Activated CD4-positive, alpha-beta memory T cell treated with anti-CD3 and anti-CD28 coated beads for 36 hours (primary cell): ENCODE measurements at regions of chr19 and their contacts with region 1.

Region 1: DNA sequence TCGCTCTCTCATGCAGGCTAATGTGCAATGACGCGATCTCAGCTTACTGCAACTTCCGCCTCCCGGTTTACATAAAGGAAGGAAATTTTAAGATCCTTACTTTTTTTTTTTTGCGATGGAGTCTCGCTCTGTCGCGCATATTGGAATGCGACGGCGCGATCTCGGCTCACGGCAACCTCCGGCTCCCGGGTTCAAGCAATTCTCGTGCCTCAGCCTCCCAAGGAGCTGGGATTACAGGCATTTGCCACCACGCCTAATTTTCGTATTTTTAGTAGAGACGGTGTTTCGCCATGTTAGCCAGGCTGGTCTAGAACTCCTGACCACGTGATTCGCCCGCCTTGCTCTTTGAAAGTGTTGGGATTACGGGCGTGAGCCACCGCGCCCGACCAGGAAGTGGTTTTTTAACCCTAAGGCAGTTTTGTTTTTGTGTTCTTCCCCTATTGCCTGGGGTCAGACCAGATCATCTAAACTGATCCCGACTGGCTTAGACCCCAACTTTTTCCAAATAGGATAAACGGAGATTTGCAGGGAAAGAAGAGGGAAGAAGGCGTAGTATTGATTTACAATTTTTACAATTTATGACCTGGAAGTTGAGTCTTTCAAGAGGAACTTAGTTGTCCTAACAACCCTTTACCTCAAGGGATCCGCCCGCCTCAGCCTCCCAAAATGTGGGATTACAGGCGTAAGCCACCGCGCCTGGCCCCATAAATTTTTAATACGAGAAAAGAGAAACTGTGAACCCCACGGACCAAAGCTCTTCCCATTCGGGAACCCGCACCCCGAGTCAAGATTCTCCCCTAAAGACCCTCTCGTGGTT is 142.0 kb downstream of the ZNF737 start:
- DNase-seq: peak; percentile 65
- H3K4me3 Mint-ChIP-seq: peak overlapping the region; percentile 100
- H3K27ac Mint-ChIP-seq: peak overlapping the region; percentile 100
- H3K4me1 Mint-ChIP-seq: peaks cover 13% of the 10 kb centered on the region
- H3K27me3 Mint-ChIP-seq: no peaks in the 10 kb centered on the region

Region 2: GRCh38 chr19:20051841-20052768 is 371.5 kb before region 1 on chr19:
- CTCF ChIA-PET with region 1: no interaction called
- POLR2A ChIA-PET with region 1: no interaction called
- intact Hi-C with region 1: loop called (anchors 10 kb)
- DNase-seq: peak; percentile 86
- H3K4me3 Mint-ChIP-seq: peak overlapping the region; percentile 84
- H3K27ac Mint-ChIP-seq: peak overlapping the region; percentile 65
- H3K4me1 Mint-ChIP-seq: peaks cover 13% of the 10 kb centered on the region
- H3K27me3 Mint-ChIP-seq: no peaks in the 10 kb centered on the region

Region 3: DNA sequence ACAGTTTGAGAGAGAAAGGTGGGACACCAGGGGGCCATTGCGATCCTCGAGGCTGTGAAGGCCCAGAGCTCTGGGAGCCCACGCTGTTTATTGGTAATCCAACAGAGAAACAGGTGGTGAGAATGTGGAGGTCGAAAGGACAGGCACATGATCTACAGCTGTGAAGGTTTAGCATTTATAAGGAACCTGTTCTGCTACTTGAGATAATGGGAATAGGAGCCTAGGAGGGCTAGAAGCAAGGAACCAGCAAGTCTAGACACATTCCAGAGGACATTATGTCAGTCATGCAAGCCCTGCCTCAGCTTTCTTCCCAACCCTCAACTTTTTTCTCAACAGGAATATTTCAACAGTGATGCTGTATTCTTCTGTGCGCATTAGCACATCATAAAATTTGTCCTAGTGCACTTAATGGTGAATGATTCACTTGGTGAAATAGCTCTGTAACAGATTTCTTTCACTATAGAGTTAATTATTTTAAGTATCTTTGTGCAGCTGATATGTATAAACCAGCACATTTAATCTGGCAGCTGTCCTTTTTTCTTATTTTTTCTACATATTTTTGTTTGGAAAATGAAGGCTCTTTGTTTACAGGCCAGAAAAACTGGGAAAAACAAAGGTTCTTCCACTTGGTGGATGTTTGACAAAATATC is 320.4 kb before region 1 on chr19:
- CTCF ChIA-PET with region 1: no interaction called
- POLR2A ChIA-PET with region 1: no interaction called
- intact Hi-C with region 1: no loop called
- DNase-seq: no peak
- H3K4me3 Mint-ChIP-seq: no peak overlapping the region
- H3K27ac Mint-ChIP-seq: no peak overlapping the region
- H3K4me1 Mint-ChIP-seq: no peaks in the 10 kb centered on the region
- H3K27me3 Mint-ChIP-seq: no peaks in the 10 kb centered on the region

Region 4: GRCh38 chr19:20167020-20167644 is 256.5 kb before region 1 on chr19 and contains the start of gene ZNF486:
- CTCF ChIA-PET with region 1: interaction called, 6 read pairs
- POLR2A ChIA-PET with region 1: interaction called, 6 read pairs
- intact Hi-C with region 1: loop called (anchors 5 kb)
- DNase-seq: peak; percentile 97
- H3K4me3 Mint-ChIP-seq: peak within 1 kb of the TSS; percentile 98
- H3K27ac Mint-ChIP-seq: peak within 1 kb of the TSS; percentile 92
- H3K4me1 Mint-ChIP-seq: peaks cover 45% of the 10 kb centered on the region
- H3K27me3 Mint-ChIP-seq: no peaks in the 10 kb centered on the region
- total RNA-seq, gene ZNF486: 12.5 to 12.9 TPM

Region 5: GRCh38 chr19:20565321-20566018 is 141.9 kb after region 1 on chr19 and contains the start of gene ZNF737:
- CTCF ChIA-PET with region 1: no interaction called
- POLR2A ChIA-PET with region 1: interaction called, 20 read pairs
- intact Hi-C with region 1: loop called (anchors 1 kb)
- DNase-seq: peak; percentile 95
- H3K4me3 Mint-ChIP-seq: peak within 1 kb of the TSS; percentile 94
- H3K27ac Mint-ChIP-seq: peak within 1 kb of the TSS; percentile 93
- H3K4me1 Mint-ChIP-seq: peaks cover 11% of the 10 kb centered on the region
- H3K27me3 Mint-ChIP-seq: no peaks in the 10 kb centered on the region
- total RNA-seq, gene ZNF737: 9.0 to 9.9 TPM

Region 6: DNA sequence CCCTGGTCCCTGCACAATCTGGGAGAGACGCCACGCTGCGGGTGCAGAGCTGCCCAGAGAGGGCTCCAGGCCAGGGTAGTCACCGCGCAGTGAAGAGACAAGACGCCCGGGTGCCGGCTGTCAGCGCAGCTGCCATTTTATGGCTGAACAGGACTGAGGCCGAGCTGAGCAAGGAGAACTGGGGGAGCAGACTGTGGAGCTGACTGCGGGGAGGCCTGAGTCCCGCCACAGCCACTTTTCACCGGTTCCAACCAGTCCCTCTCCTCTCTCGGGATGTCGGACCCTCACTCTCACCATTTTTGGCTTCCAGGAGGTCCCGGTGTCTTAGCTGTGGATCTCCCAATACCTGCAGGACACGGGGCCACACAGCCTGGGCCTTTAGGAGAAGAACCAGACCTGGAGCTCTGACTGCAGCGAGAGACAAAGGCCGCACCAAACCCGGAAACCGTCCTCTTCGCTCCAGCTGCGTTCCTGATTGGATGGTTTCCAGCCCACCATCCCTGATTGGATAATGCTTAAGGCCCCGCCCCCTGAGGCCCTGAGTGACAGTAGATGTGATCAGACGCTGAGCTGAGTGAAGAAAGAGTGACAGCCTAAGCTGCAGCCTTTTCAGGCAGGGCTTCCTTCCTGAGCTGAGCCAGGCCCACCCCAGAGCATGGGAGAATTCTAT is 237.7 kb after region 1 on chr19 and contains the start of gene ZNF626:
- CTCF ChIA-PET with region 1: no interaction called
- POLR2A ChIA-PET with region 1: interaction called, 5 read pairs
- intact Hi-C with region 1: loop called (anchors 5 kb)
- DNase-seq: peak; percentile 96
- H3K4me3 Mint-ChIP-seq: peak within 1 kb of the TSS; percentile 91
- H3K27ac Mint-ChIP-seq: peak within 1 kb of the TSS; percentile 90
- H3K4me1 Mint-ChIP-seq: peaks cover 43% of the 10 kb centered on the region
- H3K27me3 Mint-ChIP-seq: no peaks in the 10 kb centered on the region
- total RNA-seq, gene ZNF626: 8.7 to 12.5 TPM

Region 7: GRCh38 chr19:20923077-20923871 is 499.7 kb after region 1 on chr19 and contains the start of gene ZNF85:
- CTCF ChIA-PET with region 1: no interaction called
- POLR2A ChIA-PET with region 1: interaction called, 4 read pairs
- intact Hi-C with region 1: loop called (anchors 10 kb)
- DNase-seq: peak; percentile 95
- H3K4me3 Mint-ChIP-seq: peak within 1 kb of the TSS; percentile 98
- H3K27ac Mint-ChIP-seq: peak within 1 kb of the TSS; percentile 94
- H3K4me1 Mint-ChIP-seq: peaks cover 23% of the 10 kb centered on the region
- H3K27me3 Mint-ChIP-seq: no peaks in the 10 kb centered on the region
- total RNA-seq, gene ZNF85: 15.4 to 18.5 TPM

Region 8: DNA sequence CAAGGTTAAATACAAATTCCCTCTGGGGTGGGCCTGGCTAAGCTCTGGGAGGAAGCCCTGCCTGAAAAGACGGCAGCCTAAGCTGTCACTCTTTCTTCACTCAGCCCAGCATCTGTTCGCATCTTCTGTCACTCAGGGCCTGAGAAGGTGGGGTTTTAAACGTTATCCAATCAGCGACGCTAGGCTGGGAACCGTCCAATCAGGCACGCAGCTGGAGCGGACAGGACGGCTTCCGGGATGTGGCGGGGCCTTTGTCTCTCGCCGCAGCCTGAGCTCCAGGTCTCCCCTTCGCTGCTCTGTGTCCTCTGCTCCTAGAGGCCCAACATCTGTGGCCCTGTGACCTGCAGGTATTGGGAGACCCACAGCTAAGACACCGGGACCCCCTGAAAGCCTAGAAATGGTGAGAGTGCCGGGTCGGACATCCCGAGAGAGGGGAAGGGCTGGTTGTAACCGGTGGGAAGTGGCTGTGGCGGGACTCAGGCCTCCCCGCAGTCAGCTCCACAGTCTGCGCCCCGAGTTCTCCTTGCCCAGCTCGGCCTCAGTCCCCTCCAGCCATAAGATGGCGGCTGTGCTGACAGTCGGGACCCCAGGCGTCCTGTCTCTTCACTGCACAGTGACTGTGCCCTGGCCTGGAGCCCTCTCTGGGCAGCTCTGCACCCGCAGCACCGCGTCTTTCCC is 718.3 kb after region 1 on chr19 and contains the start of gene ZNF431:
- CTCF ChIA-PET with region 1: no interaction called
- POLR2A ChIA-PET with region 1: no interaction called
- intact Hi-C with region 1: loop called (anchors 2 kb)
- DNase-seq: peak; percentile 94
- H3K4me3 Mint-ChIP-seq: peak within 1 kb of the TSS; percentile 96
- H3K27ac Mint-ChIP-seq: peak within 1 kb of the TSS; percentile 90
- H3K4me1 Mint-ChIP-seq: peaks cover 41% of the 10 kb centered on the region
- H3K27me3 Mint-ChIP-seq: no peaks in the 10 kb centered on the region
- total RNA-seq, gene ZNF431: 16.9 to 17.1 TPM